ENCODE measurements at regions of chr13 and their contacts with region 1.

Region 1: DNA sequence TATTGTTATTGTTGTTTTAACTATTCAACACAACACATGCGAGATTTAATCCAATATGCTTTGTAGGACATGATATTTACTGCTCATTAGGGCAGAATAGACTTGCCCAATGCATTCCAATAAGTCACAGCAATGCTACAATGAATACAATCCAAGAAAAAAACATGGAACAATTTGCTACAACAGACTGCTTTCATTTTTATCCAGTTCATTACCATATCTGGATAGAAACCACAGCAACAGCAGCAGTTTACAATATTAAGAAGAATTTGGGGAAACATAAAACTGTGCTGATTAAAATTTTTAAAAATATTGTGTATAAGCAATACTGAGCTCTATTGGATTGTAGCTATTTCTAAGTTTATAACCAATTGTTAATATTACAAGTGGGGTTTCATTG is 833.0 kb downstream of the DIAPH3 start:
- DNase-seq: no peak
- H3K4me3 ChIP-seq: no peak overlapping the region
- H3K4me3 Mint-ChIP-seq: no peak overlapping the region
- H3K27ac ChIP-seq: no peak overlapping the region
- H3K27ac Mint-ChIP-seq: no peak overlapping the region
- H3K4me1 ChIP-seq: no peaks in the 10 kb centered on the region
- H3K4me1 Mint-ChIP-seq: no peaks in the 10 kb centered on the region
- H3K27me3 ChIP-seq: no peaks in the 10 kb centered on the region
- H3K27me3 Mint-ChIP-seq: peaks cover 0 to 4% of the 10 kb centered on the region in 2 donors

Region 2: GRCh38 chr13:59318320-59318930 is 12.3 kb before region 1 on chr13:
- CTCF ChIA-PET with region 1: interaction called, 15 read pairs
- POLR2A ChIA-PET with region 1: no interaction called
- intact Hi-C with region 1: no loop called
- DNase-seq: peak in 4 of 5 donors; percentile 21 to 29 (median 28)
- H3K4me3 ChIP-seq: no peak overlapping the region
- H3K4me3 Mint-ChIP-seq: no peak overlapping the region
- H3K27ac ChIP-seq: no peak overlapping the region
- H3K27ac Mint-ChIP-seq: no peak overlapping the region
- H3K4me1 ChIP-seq: no peaks in the 10 kb centered on the region
- H3K4me1 Mint-ChIP-seq: no peaks in the 10 kb centered on the region
- H3K27me3 ChIP-seq: no peaks in the 10 kb centered on the region
- H3K27me3 Mint-ChIP-seq: peaks cover 1 to 6% of the 10 kb centered on the region in 2 donors